ENCODE measurements at regions of chr5 and their contacts with region 1.

Region 1: GRCh38 chr5:88140856-88141752 is 127.5 kb downstream of the TMEM161B start:
- DNase-seq: peak; percentile 99
- H3K4me3 ChIP-seq: peak overlapping the region; percentile 56
- H3K27ac ChIP-seq: peak overlapping the region; percentile 49
- H3K4me1 ChIP-seq: no peaks in the 10 kb centered on the region
- H3K27me3 ChIP-seq: no peaks in the 10 kb centered on the region
- CTCF ChIP-seq: peak; percentile 67

Region 2: GRCh38 chr5:87944553-87945285 is 196.4 kb before region 1 on chr5:
- CTCF ChIA-PET with region 1: interaction called, 10 read pairs
- POLR2A ChIA-PET with region 1: no interaction called
- intact Hi-C with region 1: no loop called
- DNase-seq: peak; percentile 86
- H3K4me3 ChIP-seq: no peak overlapping the region
- H3K27ac ChIP-seq: no peak overlapping the region
- H3K4me1 ChIP-seq: peaks cover under 1% of the 10 kb centered on the region
- H3K27me3 ChIP-seq: peaks cover 25% of the 10 kb centered on the region
- CTCF ChIP-seq: no peak

Region 3: DNA sequence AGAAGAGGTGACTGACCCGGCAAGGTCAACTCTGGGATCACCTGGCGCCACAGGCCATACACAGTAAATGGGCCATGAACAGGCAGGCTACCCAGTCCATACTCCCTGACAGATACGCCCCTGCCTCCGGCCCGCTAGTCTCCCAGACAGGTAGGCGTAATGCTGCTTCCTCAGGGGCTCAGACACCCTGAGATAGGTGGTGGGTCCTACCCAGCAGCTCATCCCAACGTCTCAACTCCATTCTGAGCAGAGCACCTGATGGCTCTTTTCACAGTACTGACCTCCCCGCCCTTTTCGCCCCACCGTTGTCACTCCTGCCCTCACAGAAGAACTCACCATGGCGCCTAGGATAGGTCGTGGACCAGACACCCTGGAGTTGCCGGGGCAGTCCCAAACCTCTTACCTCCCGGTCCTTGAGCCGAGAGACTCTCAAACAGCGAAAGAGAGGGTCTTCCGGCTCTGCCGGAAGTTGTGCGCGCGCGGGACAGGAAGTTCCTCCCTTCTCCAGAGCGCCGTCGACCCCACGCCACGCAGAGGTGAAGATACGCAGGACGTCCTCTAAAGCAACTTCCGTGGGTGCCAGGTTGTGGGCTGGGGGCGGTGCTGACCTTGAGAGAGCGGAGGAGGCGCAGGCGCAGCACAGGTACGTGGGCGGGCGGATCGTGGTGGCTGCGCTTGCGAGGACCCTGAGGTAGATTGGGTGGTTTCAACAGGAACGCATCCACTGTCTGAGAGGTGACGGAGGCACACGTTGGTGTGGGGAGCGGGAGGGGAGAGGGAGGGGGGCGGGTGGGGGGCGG is 127.5 kb after region 1 on chr5 and contains the start of gene TMEM161B:
- CTCF ChIA-PET with region 1: no interaction called
- POLR2A ChIA-PET with region 1: no interaction called
- intact Hi-C with region 1: loop called (anchors 2 kb)
- DNase-seq: peak; percentile 96
- H3K4me3 ChIP-seq: peak within 1 kb of the TSS; percentile 71
- H3K27ac ChIP-seq: peak within 1 kb of the TSS; percentile 61
- H3K4me1 ChIP-seq: peaks cover 16% of the 10 kb centered on the region
- H3K27me3 ChIP-seq: no peaks in the 10 kb centered on the region
- CTCF ChIP-seq: no peak
- total RNA-seq, gene TMEM161B: 19.7 and 20.7 TPM in 2 replicates

Region 4: DNA sequence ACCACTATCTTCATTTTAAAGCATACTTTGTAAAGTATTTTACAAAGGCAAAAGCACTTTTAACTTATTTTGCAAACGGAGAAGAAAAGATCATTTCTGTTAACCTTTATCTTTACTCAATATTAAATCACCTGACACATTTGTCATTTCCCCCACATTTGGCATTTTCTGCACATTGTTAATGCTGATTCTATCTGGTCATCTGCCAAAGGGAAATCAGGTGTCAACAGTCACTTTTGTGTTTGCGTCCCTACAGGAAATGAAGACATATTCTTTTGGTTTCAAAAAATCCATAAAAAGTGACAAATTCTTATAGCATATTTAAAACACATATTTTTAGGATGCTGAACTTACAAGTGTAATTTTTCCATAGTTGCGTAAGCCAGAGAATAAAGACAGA is 318.9 kb after region 1 on chr5:
- CTCF ChIA-PET with region 1: interaction called, 16 read pairs
- POLR2A ChIA-PET with region 1: no interaction called
- intact Hi-C with region 1: no loop called
- DNase-seq: no peak
- H3K4me3 ChIP-seq: no peak overlapping the region
- H3K27ac ChIP-seq: no peak overlapping the region
- H3K4me1 ChIP-seq: no peaks in the 10 kb centered on the region
- H3K27me3 ChIP-seq: no peaks in the 10 kb centered on the region
- CTCF ChIP-seq: no peak

Region 5: GRCh38 chr5:88536146-88536545 is 395.0 kb after region 1 on chr5:
- CTCF ChIA-PET with region 1: no interaction called
- POLR2A ChIA-PET with region 1: no interaction called
- intact Hi-C with region 1: no loop called
- DNase-seq: no peak
- H3K4me3 ChIP-seq: no peak overlapping the region
- H3K27ac ChIP-seq: no peak overlapping the region
- H3K4me1 ChIP-seq: no peaks in the 10 kb centered on the region
- H3K27me3 ChIP-seq: no peaks in the 10 kb centered on the region
- CTCF ChIP-seq: no peak